ENCODE measurements at regions of chr21 and their contacts with region 1.

Region 1: GRCh38 chr21:32278518-32279376 is at the start of gene MIS18A:
- DNase-seq: peak; percentile 98
- ATAC-seq: peak; percentile 92
- H3K4me3 ChIP-seq: peak within 1 kb of the TSS; percentile 92
- H3K27ac ChIP-seq: peak within 1 kb of the TSS; percentile 23
- H3K4me1 ChIP-seq: peaks cover 14% of the 10 kb centered on the region
- H3K27me3 ChIP-seq: no peaks in the 10 kb centered on the region
- CTCF ChIP-seq: no peak
- total RNA-seq, gene MIS18A: 42.0 and 54.5 TPM in 2 replicates

Region 2: GRCh38 chr21:30625449-30626165 is 1653.1 kb before region 1 on chr21:
- CTCF ChIA-PET with region 1: no interaction called
- POLR2A ChIA-PET with region 1: interaction called, 22 read pairs
- intact Hi-C with region 1: no loop called
- DNase-seq: no peak
- ATAC-seq: no peak
- H3K4me3 ChIP-seq: no peak overlapping the region
- H3K27ac ChIP-seq: no peak overlapping the region
- H3K4me1 ChIP-seq: peaks cover 28% of the 10 kb centered on the region
- H3K27me3 ChIP-seq: no peaks in the 10 kb centered on the region
- CTCF ChIP-seq: no peak

Region 3: GRCh38 chr21:31708541-31708940 is 570.2 kb before region 1 on chr21:
- CTCF ChIA-PET with region 1: no interaction called
- POLR2A ChIA-PET with region 1: no interaction called
- intact Hi-C with region 1: no loop called
- DNase-seq: no peak
- ATAC-seq: no peak
- H3K4me3 ChIP-seq: no peak overlapping the region
- H3K27ac ChIP-seq: no peak overlapping the region
- H3K4me1 ChIP-seq: peaks cover 10% of the 10 kb centered on the region
- H3K27me3 ChIP-seq: no peaks in the 10 kb centered on the region
- CTCF ChIP-seq: no peak

Region 4: DNA sequence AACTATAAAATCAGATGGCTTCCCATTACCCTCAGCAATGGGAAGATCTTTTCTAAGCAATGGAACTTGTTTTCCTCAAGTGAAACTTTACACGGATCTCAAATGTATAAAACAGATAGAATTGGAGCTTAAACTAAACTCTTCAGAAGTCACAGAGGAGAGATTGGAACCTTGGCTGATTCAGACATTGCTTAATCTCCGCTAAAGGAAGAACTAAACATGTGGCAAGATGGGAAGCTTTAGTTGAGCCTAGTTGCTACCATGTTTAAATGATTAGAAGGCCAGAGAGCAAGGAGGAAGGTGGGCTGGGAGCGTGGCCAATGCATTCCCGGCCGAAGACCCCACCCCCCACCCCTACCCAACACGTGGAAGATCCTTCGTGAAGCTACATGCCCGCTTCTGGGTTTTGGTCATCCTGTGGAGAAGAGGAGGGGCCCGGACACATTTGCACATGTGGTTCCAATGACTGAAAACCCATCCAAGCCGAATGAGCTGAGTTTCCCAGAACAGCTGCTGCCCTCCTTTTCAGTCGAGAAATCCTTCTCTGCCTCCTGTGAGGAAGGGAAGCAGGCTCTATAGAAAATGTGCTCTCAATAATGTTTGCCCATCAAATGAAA is 164.2 kb before region 1 on chr21:
- CTCF ChIA-PET with region 1: no interaction called
- POLR2A ChIA-PET with region 1: no interaction called
- intact Hi-C with region 1: no loop called
- DNase-seq: no peak
- ATAC-seq: no peak
- H3K4me3 ChIP-seq: no peak overlapping the region
- H3K27ac ChIP-seq: no peak overlapping the region
- H3K4me1 ChIP-seq: no peaks in the 10 kb centered on the region
- H3K27me3 ChIP-seq: peaks cover 69% of the 10 kb centered on the region
- CTCF ChIP-seq: no peak

Region 5: DNA sequence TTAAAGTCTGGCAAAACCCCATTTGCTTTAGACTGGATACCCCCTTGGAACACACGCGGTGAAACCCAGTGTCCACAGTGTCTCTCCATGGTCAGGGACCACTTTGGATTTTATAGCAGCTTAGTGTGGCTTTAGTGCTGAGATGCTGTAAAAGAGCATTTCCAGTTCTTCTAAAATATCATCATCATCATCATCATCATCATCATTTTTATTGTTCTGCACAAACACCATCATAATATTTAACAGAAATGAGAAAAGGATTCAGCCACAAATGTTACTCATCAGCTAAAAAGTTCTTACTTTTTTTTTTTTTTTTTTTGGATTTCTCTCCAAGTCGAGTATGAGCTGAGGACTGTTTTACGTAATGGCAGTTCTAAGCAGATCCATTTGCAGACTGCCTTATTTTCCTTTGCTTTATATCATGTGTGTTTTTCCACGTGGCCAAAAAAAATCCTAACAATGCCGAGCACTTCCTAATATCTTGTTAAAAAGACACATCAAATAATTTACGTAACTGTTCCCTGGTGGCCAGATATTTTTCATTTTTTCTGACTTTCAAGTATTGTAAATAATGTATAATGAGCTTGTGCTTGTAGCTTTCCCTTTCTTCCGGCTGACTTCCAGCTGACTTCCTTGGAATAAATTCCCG is 196.5 kb after region 1 on chr21:
- CTCF ChIA-PET with region 1: no interaction called
- POLR2A ChIA-PET with region 1: no interaction called
- intact Hi-C with region 1: no loop called
- DNase-seq: peak; percentile 52
- ATAC-seq: peak; percentile 52
- H3K4me3 ChIP-seq: peak overlapping the region; percentile 25; the same call in 1 of the 2 replicates
- H3K27ac ChIP-seq: peak overlapping the region; percentile 41
- H3K4me1 ChIP-seq: peaks cover 38% of the 10 kb centered on the region
- H3K27me3 ChIP-seq: no peaks in the 10 kb centered on the region
- CTCF ChIP-seq: no peak